OCI-LY7 (cell line): ENCODE measurements at regions of chr7 and their contacts with region 1.

Region 1: DNA sequence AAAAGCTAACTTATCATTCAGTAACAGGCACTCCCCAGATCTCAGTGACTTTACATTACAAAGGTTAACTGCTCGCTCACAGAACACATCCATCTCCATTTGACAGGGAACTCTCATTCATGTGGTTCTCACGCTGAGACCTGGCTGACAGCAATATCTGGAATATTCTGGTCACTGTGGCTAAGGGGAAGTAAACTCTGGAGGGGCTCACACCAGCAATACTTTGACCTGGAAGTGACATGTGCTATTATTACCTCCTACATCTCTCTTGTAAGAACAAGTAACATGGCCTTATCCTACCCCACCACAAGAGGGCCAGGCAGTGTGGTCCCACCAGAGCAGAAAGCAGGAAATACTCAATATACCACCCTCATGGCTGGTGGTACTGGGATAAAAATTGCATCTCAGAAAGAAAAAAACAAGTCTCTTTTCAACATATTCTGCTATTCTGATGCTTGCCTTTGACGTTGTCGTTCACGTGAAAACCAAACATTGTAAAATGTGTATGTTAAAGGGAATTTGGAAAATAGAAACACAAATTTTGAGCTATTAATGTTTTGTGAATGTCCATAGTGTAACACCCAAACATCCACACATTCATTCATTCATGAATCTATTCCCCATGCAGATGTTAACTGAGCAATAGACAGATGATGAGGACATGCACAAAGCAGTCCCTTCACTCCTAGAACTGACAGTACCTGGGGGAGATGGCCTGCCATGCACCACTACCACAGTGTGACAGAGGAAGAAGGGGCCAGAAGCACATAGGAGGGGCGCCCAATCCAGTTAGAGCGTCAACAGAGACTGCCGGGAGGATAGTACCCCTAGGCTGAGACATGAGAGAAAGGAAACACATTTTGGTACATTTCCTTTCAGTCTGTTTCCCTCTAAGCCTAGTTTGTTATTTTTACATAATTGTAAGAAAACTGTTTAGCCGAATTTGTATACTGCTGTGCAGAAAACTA is 166.0 kb upstream of the SP4 start:
- DNase-seq: peak; percentile 44
- H3K4me3 ChIP-seq: no peak overlapping the region
- H3K27ac ChIP-seq: no peak overlapping the region
- H3K4me1 ChIP-seq: no peaks in the 10 kb centered on the region
- CTCF ChIP-seq: peak; percentile 76

Region 2: GRCh38 chr7:21504016-21504415 is 242.1 kb after region 1 on chr7:
- CTCF ChIA-PET with region 1: no interaction called
- POLR2A ChIA-PET with region 1: no interaction called
- intact Hi-C with region 1: loop called (anchors 5 kb)
- DNase-seq: no peak
- H3K4me3 ChIP-seq: no peak overlapping the region
- H3K27ac ChIP-seq: no peak overlapping the region
- H3K4me1 ChIP-seq: no peaks in the 10 kb centered on the region
- CTCF ChIP-seq: no peak

Region 3: GRCh38 chr7:22082886-22083703 is 821.2 kb after region 1 on chr7:
- CTCF ChIA-PET with region 1: no interaction called
- POLR2A ChIA-PET with region 1: no interaction called
- intact Hi-C with region 1: loop called (anchors 5 kb)
- DNase-seq: peak; percentile 79
- H3K4me3 ChIP-seq: peak overlapping the region; percentile 69
- H3K27ac ChIP-seq: no peak overlapping the region
- H3K4me1 ChIP-seq: peaks cover 5% of the 10 kb centered on the region
- CTCF ChIP-seq: peak; percentile 93